ENCODE measurements at regions of chr18 and their contacts with region 1.

Region 1: GRCh38 chr18:69916412-69916811 is 31.3 kb downstream of the CD226 start:
- DNase-seq: no peak
- ATAC-seq: no peak

Region 2: GRCh38 chr18:68340606-68341005 is 1575.8 kb before region 1 on chr18:
- intact Hi-C with region 1: no loop called
- DNase-seq: no peak
- ATAC-seq: no peak

Region 3: DNA sequence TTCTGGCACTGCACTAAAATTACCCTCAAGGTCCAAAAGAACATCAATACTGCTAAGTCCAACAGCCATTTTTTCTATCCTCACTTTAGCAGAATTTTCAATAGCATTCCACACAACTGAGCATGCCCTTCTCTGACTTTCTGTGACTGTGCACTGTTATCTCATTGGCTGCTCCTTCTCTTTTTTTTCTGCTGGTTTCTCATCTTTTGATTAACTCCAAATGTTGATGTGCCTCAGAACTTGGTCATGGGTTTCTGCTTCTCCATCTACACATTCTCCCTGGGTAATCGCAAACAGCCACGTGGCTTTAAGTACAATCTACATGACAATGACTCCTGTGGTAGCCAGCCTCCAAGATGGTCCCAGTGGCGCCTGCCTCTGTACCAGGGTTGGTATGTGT is 106.2 kb after region 1 on chr18:
- intact Hi-C with region 1: loop called (anchors 2 kb)
- DNase-seq: no peak
- ATAC-seq: no peak

Measured in sciatic nerve (tissue), 2 donors.